Panc1 (cell line): ENCODE measurements at regions of chr7 and their contacts with region 1.

Region 1: DNA sequence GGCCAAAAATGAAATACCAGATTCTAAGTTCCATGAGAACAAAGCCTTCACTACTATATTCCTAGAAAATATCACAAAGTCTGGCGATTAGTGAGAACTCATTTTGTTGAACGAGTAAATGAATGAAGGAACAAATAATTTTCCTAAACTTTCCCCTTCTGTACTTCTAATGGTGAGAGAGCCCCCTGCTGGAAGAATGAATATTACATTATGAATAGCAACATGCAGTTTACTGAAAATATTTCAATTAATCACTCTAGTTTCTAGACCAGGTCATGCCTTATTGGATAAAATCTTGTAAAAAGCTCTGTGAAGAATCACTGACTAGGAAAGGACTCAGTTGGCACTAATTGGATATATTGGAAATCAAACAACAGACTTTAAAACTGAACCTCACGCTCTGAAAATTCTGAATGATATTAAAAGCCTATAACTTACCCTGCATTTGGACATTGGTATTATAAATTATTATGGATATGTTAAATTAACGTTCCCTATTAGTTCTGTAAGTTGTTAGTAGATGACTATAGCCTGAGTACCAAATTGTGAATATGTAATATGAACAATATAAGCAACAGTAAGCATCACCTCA is 32.4 kb upstream of the MTPN start:
- DNase-seq: peak; percentile 17
- ATAC-seq: no peak
- H3K4me3 ChIP-seq: no peak overlapping the region
- H3K27ac ChIP-seq: no peak overlapping the region
- H3K4me1 ChIP-seq: no peaks in the 10 kb centered on the region
- H3K27me3 ChIP-seq: peaks cover 2% of the 10 kb centered on the region; the same call in 1 of the 2 replicates
- CTCF ChIP-seq: peak; percentile 70; the same call in 1 of the 2 replicates

Region 2: GRCh38 chr7:135661311-135662122 is 348.1 kb before region 1 on chr7:
- CTCF ChIA-PET with region 1: no interaction called
- POLR2A ChIA-PET with region 1: no interaction called
- in situ Hi-C with region 1: no loop called
- intact Hi-C with region 1: no loop called
- DNase-seq: no peak
- ATAC-seq: peak; percentile 41
- H3K4me3 ChIP-seq: peak overlapping the region; percentile 91 to 98
- H3K27ac ChIP-seq: peak overlapping the region; percentile 84
- H3K4me1 ChIP-seq: peaks cover 5% of the 10 kb centered on the region; the same call in 1 of the 2 replicates
- H3K27me3 ChIP-seq: no peaks in the 10 kb centered on the region
- CTCF ChIP-seq: no peak

Region 3: GRCh38 chr7:135672560-135673359 is 336.8 kb before region 1 on chr7:
- CTCF ChIA-PET with region 1: no interaction called
- POLR2A ChIA-PET with region 1: no interaction called
- in situ Hi-C with region 1: no loop called
- intact Hi-C with region 1: loop called (anchors 2 kb)
- DNase-seq: no peak
- ATAC-seq: peak; percentile 90
- H3K4me3 ChIP-seq: no peak overlapping the region
- H3K27ac ChIP-seq: no peak overlapping the region
- H3K4me1 ChIP-seq: peaks cover 3% of the 10 kb centered on the region; the same call in 1 of the 2 replicates
- H3K27me3 ChIP-seq: no peaks in the 10 kb centered on the region
- CTCF ChIP-seq: peak; percentile 80

Region 4: DNA sequence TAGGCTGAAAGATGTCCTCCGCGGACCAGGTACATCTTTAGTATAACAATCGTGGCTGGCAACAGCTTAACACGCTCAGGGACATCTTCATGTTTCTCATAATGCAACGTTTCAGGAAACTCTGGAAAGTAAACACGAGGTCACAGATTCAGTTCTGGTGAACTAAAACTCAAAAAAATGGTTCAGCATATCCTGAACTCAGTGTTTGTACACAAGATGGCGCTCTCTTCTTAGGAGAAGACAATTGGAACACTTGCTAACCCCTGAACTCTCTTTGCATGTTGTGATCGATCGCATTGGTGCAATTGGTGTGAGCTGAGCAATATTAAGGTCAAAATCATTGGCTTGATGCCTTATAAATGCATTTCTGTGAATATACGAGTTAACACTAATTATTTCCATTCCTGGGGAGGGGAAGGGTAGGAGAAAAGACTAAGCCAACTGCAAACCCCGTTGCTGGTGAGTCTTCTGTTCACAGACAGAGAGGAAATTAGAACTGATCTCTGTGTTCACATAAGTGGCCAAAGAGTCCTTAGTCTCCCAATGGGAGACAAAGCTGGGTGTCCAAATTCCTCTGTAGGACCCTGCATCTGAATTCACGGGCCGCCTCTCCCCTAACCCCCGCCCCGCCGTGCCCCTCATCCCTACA is 208.4 kb before region 1 on chr7:
- CTCF ChIA-PET with region 1: interaction called, 5 read pairs
- POLR2A ChIA-PET with region 1: no interaction called
- in situ Hi-C with region 1: no loop called
- intact Hi-C with region 1: loop called (anchors 1 kb)
- DNase-seq: peak; percentile 56
- ATAC-seq: peak; percentile 81
- H3K4me3 ChIP-seq: no peak overlapping the region
- H3K27ac ChIP-seq: no peak overlapping the region
- H3K4me1 ChIP-seq: peaks cover 5% of the 10 kb centered on the region; the same call in 1 of the 2 replicates
- H3K27me3 ChIP-seq: peaks cover 10% of the 10 kb centered on the region
- CTCF ChIP-seq: peak; percentile 82

Region 5: GRCh38 chr7:135855846-135856245 is 153.7 kb before region 1 on chr7:
- CTCF ChIA-PET with region 1: interaction called, 13 read pairs
- POLR2A ChIA-PET with region 1: no interaction called
- in situ Hi-C with region 1: no loop called
- intact Hi-C with region 1: no loop called
- DNase-seq: no peak
- ATAC-seq: no peak
- H3K4me3 ChIP-seq: no peak overlapping the region
- H3K27ac ChIP-seq: no peak overlapping the region
- H3K4me1 ChIP-seq: no peaks in the 10 kb centered on the region
- H3K27me3 ChIP-seq: no peaks in the 10 kb centered on the region
- CTCF ChIP-seq: no peak

Region 6: GRCh38 chr7:135964274-135964673 is 45.3 kb before region 1 on chr7:
- CTCF ChIA-PET with region 1: no interaction called
- POLR2A ChIA-PET with region 1: no interaction called
- in situ Hi-C with region 1: no loop called
- intact Hi-C with region 1: no loop called
- DNase-seq: no peak
- ATAC-seq: no peak
- H3K4me3 ChIP-seq: no peak overlapping the region
- H3K27ac ChIP-seq: no peak overlapping the region
- H3K4me1 ChIP-seq: 0 out of 2 replicates have a peak, but pooled peaks cover 3% of the 10 kb centered on the region
- H3K27me3 ChIP-seq: no peaks in the 10 kb centered on the region
- CTCF ChIP-seq: no peak